HepG2 (cell line): ENCODE measurements at regions of chr17 and their contacts with region 1.

Region 1: DNA sequence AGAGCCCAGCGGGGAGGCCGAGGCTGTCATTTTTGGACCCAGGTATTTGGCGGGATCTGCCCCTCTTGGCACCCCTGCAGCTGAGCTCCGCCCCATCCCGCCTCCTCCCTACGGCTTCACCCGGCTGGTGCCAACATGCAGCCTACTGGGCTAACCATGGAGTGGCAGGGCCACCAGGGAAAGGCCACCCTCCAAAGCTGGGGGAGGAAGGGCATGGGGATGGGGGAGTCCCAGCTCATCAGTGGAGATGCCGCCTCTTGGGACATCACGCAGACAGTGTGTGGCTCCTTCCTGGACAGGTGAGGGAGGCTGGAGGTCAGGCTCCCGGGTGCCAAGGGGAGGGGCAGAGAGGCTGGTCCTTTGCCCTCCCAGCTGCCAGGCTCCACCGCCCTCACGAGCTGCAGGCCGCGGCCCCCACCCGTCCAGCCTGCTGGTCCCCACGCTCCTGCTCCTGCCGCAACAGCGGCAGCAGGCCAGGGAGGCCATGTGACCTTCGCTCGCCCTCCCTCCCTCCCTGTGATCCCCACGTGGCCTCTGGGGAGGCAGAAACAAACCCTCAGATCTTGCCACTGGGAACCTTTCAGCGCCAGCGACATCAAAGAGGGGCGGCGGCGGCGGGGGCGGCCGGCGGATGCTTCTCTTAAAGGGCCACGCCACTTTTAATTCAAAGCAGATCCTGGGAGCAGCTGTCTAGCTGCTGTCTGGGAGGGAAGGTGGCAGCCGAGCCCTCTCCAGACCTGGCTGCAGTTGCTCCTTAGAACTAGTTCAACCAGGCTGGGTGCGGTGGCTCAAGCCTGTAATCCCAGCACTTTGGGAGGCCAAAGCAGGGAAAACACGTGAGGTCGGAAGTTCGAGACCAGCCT is 6.8 kb upstream of the NOTUM start:
- DNase-seq: peak; percentile 98
- ATAC-seq: peak; percentile 79
- H3K4me3 ChIP-seq: peak overlapping the region; percentile 44 to 74 (median 48)
- H3K27ac ChIP-seq: peak overlapping the region; percentile 75
- H3K4me1 ChIP-seq: peaks cover 70% of the 10 kb centered on the region
- H3K27me3 ChIP-seq: no peaks in the 10 kb centered on the region
- CTCF ChIP-seq: peak; percentile 49
- EP300 ChIP-seq: peak in 1 of 2 experiments; percentile 90; a peak in 3 of 4 replicates
- POLR2A ChIP-seq: peak in 1 of 2 experiments; percentile 41; a peak in 1 of 4 replicates
- RAD21 ChIP-seq: 0 out of 2 replicates have a peak, but pooled peaks have one; percentile 14

Region 2: GRCh38 chr17:82003411-82004381 is 35.9 kb after region 1 on chr17:
- CTCF ChIA-PET with region 1: no interaction called
- POLR2A ChIA-PET with region 1: interaction called, 382 read pairs
- in situ Hi-C with region 1: no loop called
- intact Hi-C with region 1: no loop called
- DNase-seq: peak; percentile 92
- ATAC-seq: peak; percentile 8
- H3K4me3 ChIP-seq: peak overlapping the region in 1 of 3 experiments; percentile 29; a peak in 1 of 6 replicates
- H3K27ac ChIP-seq: peak overlapping the region; percentile 95
- H3K4me1 ChIP-seq: peaks cover 76% of the 10 kb centered on the region
- H3K27me3 ChIP-seq: no peaks in the 10 kb centered on the region
- CTCF ChIP-seq: peak; percentile 51
- EP300 ChIP-seq: peak in 1 of 2 experiments; percentile 85; a peak in 2 of 4 replicates
- POLR2A ChIP-seq: no peak
- RAD21 ChIP-seq: no peak; the same call in 1 of the 2 replicates

Region 3: DNA sequence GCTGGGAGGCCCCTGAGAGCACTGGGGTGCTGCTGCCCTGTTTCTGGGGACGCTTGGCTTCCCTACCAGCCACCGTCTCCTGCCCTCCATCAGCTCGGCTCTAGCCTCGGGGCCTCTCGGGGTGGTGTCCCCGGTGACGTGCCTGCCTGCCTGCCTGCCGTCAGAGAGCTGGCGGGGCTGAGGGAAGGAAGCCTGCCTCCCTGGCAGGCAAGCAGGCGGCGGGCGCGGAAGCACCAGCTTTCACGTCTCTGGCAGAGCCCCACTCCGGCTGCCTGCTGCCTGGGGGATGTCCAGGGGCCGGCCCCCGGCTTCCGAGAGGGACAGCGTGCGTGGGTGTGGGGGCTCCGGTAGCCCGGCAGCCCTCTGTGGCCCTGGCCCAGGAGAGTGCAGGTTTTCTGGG is 45.6 kb after region 1 on chr17:
- CTCF ChIA-PET with region 1: no interaction called
- POLR2A ChIA-PET with region 1: interaction called, 120 read pairs
- in situ Hi-C with region 1: no loop called
- intact Hi-C with region 1: no loop called
- DNase-seq: no peak
- ATAC-seq: no peak; the same call in 2 of the 3 replicates
- H3K4me3 ChIP-seq: no peak overlapping the region
- H3K27ac ChIP-seq: peak overlapping the region; percentile 68
- H3K4me1 ChIP-seq: peaks cover 92% of the 10 kb centered on the region
- H3K27me3 ChIP-seq: no peaks in the 10 kb centered on the region
- CTCF ChIP-seq: no peak
- EP300 ChIP-seq: no peak
- POLR2A ChIP-seq: no peak
- RAD21 ChIP-seq: no peak